ENCODE measurements at regions of chr17 and their contacts with region 1.

Region 1: DNA sequence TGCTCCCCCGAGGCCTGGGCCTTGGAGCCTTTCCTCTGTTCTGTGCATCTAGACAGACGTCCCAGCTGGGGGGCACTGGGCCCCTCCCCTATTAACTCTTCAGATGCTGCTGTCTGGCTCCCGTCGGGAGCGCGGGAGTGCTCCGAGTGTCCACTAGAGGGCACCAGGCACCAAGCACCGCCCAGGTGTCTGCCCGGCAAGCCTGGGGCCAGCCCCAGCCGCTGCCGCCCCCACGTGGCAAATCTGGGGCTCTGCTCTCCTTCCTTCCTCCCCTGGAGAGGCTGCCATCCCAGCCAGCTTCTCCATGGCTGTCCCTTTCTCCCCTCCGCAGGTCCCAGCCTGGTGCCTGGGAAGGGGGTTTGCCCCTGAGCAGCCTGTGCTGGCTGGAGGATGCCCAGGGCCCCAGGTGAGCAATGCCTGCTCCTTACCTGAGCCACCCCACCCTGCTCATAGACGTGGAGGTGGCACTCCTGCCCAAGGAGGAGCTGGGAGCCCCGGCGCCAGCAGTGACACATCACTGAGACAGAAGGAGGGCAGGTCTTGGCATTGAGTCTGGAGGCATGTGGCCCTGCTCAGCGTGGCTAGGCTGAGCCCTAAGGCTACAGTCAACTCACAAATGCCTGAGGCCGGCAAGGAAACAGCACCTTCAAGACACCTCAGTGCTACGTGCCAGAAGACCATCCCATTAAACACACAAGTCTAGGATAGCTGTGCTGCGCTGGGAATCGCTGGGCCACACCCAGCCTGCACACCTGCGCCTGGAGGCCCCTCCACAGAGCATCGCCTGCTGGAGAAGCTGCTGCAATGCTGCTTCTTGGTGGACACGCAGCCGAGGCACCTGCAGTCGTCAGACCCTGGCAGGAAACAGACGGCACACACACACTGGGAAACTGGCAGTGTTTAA is 19.7 kb downstream of the TMEM235 start:
- DNase-seq: peak; percentile 93
- H3K4me3 ChIP-seq: peak overlapping the region; percentile 30
- H3K27ac ChIP-seq: peak overlapping the region; percentile 61
- H3K4me1 ChIP-seq: peaks cover 40% of the 10 kb centered on the region
- CTCF ChIP-seq: peak; percentile 100

Region 2: GRCh38 chr17:78019367-78019975 is 231.7 kb before region 1 on chr17:
- CTCF ChIA-PET with region 1: no interaction called
- POLR2A ChIA-PET with region 1: no interaction called
- intact Hi-C with region 1: loop called (anchors 2 kb)
- DNase-seq: peak; percentile 49
- H3K4me3 ChIP-seq: no peak overlapping the region
- H3K27ac ChIP-seq: no peak overlapping the region
- H3K4me1 ChIP-seq: no peaks in the 10 kb centered on the region
- CTCF ChIP-seq: peak; percentile 96

Region 3: GRCh38 chr17:78112518-78113226 is 138.5 kb before region 1 on chr17:
- CTCF ChIA-PET with region 1: no interaction called
- POLR2A ChIA-PET with region 1: no interaction called
- intact Hi-C with region 1: loop called (anchors 1 kb)
- DNase-seq: peak; percentile 75
- H3K4me3 ChIP-seq: no peak overlapping the region
- H3K27ac ChIP-seq: no peak overlapping the region
- H3K4me1 ChIP-seq: no peaks in the 10 kb centered on the region
- CTCF ChIP-seq: peak; percentile 100

Region 4: DNA sequence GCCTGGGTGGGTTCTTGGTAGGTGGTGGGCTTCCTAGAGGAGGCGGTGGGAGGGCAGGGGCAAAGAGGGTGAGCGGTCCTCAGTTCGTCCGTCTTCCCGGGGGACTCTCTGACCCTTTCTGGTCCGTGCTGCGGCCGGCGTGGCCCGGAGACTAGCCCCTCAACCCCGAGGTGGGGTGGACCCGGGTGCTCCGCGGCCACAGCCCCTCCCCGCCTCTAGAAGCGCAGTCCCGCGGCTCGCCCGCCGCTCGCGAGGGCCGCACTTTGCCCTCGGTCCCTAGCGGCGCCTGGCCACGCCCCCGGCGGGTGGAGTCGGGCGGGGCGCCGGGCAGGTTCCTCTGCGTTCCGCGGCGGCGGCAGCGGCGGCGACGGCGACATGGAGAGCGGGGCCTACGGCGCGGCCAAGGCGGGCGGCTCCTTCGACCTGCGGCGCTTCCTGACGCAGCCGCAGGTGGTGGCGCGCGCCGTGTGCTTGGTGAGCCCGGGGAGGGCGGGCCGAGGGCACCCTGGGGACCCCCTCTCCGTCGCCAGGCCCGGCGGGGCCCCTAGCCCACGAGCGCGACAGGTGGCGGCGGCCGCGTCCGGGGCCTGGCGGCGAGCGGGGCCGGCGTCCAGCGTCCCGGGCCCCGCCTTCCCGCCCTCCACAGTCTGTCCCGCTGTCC is 82.8 kb before region 1 on chr17 and contains the start of gene SYNGR2:
- CTCF ChIA-PET with region 1: no interaction called
- POLR2A ChIA-PET with region 1: no interaction called
- intact Hi-C with region 1: loop called (anchors 2 kb)
- DNase-seq: peak; percentile 93
- H3K4me3 ChIP-seq: peak within 1 kb of the TSS; percentile 75
- H3K27ac ChIP-seq: no peak within 1 kb of the TSS
- H3K4me1 ChIP-seq: peaks cover 53% of the 10 kb centered on the region
- CTCF ChIP-seq: no peak
- total RNA-seq, gene SYNGR2: 21.3 and 35.4 TPM in 2 replicates

Region 5: GRCh38 chr17:78214706-78215061 is 36.5 kb before region 1 on chr17:
- CTCF ChIA-PET with region 1: interaction called, 3 read pairs
- POLR2A ChIA-PET with region 1: no interaction called
- intact Hi-C with region 1: loop called (anchors 2 kb)
- DNase-seq: peak; percentile 53
- H3K4me3 ChIP-seq: peak overlapping the region; percentile 75
- H3K27ac ChIP-seq: peak overlapping the region; percentile 75
- H3K4me1 ChIP-seq: peaks cover 18% of the 10 kb centered on the region
- CTCF ChIP-seq: no peak

Region 6: DNA sequence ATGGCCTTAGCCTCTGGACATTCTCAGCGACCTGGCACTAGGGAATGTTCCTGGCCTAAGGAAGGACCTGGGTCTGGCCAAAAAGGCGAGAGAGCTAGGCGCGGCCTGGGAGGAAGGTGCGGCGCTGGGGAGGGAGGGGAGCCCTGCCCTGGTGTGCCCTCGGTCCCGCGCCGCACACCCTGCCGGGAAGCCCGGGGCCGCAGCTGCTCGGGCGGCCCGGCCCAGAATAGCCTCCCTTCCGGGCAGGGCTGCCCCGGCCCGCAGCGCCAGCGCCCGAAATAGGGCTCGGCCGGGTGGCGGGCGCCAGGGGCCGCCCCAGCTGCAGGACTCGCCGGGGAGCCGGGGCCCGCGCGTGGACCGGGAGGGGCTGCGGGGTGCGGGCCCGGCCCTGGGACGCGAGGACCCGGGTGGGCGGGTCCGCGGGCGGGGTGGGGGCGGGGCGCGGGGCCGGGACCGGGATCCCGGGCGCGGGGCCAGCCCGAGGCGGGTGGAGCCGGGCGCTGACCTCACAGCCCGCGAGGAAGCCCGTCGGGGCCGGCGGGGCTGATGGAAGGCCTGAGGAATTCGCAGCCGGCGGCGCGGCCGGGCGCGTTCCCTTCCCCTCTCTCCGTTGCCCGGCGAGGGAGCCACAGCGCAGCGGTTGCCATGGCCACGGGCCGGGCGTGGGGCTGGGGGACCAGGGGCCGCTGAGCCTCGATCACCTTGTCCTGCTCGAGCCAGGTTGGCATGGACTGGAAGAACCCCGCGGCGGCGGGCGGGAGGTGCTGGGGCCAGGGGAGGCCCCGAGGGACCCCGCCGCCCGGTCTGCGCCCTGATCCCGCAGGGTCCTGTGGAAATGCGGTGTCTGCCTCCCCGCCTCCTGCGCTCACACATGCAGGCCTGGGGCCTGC is 90.7 kb after region 1 on chr17:
- CTCF ChIA-PET with region 1: no interaction called
- POLR2A ChIA-PET with region 1: no interaction called
- intact Hi-C with region 1: loop called (anchors 5 kb)
- DNase-seq: no peak
- H3K4me3 ChIP-seq: no peak overlapping the region
- H3K27ac ChIP-seq: no peak overlapping the region
- H3K4me1 ChIP-seq: peaks cover 46% of the 10 kb centered on the region
- CTCF ChIP-seq: no peak